Activated T-helper 1 cell treated with anti-CD3 and anti-CD28 coated beads, Interleukin-12 subunit alpha, Interleukin-12 subunit beta, Interleukin-2, Interleukin-4 antibody, amounts not matched to agents 30 ng/mL and 10 ng/mL and 1 ng/mL, durations not matched to agents 14 hours and 24 hours and 36 hours (primary cell): ENCODE measurements at regions of chr2 and their contacts with region 1.

Region 1: GRCh38 chr2:136423516-136423996 is 305.6 kb upstream of the CXCR4 start:
- DNase-seq: peak; percentile 70
- H3K4me3 Mint-ChIP-seq: peak overlapping the region; percentile 71
- H3K27ac Mint-ChIP-seq: peak overlapping the region; percentile 24
- H3K4me1 Mint-ChIP-seq: peaks cover 24% of the 10 kb centered on the region
- H3K27me3 Mint-ChIP-seq: peaks cover 37% of the 10 kb centered on the region

Region 2: GRCh38 chr2:135913727-135914365 is 509.7 kb before region 1 on chr2:
- intact Hi-C with region 1: loop called (anchors 1 kb)
- DNase-seq: no peak
- H3K4me3 Mint-ChIP-seq: no peak overlapping the region
- H3K27ac Mint-ChIP-seq: no peak overlapping the region
- H3K4me1 Mint-ChIP-seq: peaks cover 27% of the 10 kb centered on the region
- H3K27me3 Mint-ChIP-seq: no peaks in the 10 kb centered on the region

Region 3: GRCh38 chr2:136665736-136666135 is 242.2 kb after region 1 on chr2:
- intact Hi-C with region 1: loop called (anchors 5 kb)
- DNase-seq: no peak
- H3K4me3 Mint-ChIP-seq: no peak overlapping the region
- H3K27ac Mint-ChIP-seq: no peak overlapping the region
- H3K4me1 Mint-ChIP-seq: no peaks in the 10 kb centered on the region
- H3K27me3 Mint-ChIP-seq: peaks cover 3% of the 10 kb centered on the region

Region 4: GRCh38 chr2:136718273-136718672 is 294.7 kb after region 1 on chr2:
- intact Hi-C with region 1: no loop called
- DNase-seq: no peak
- H3K4me3 Mint-ChIP-seq: no peak overlapping the region
- H3K27ac Mint-ChIP-seq: no peak overlapping the region
- H3K4me1 Mint-ChIP-seq: no peaks in the 10 kb centered on the region
- H3K27me3 Mint-ChIP-seq: peaks cover 3% of the 10 kb centered on the region

Region 5: GRCh38 chr2:136738044-136738443 is 314.5 kb after region 1 on chr2:
- intact Hi-C with region 1: loop called (anchors 1 kb)
- DNase-seq: no peak
- H3K4me3 Mint-ChIP-seq: no peak overlapping the region
- H3K27ac Mint-ChIP-seq: no peak overlapping the region
- H3K4me1 Mint-ChIP-seq: no peaks in the 10 kb centered on the region
- H3K27me3 Mint-ChIP-seq: no peaks in the 10 kb centered on the region